ENCODE measurements at regions of chr12 and their contacts with region 1.

Region 1: DNA sequence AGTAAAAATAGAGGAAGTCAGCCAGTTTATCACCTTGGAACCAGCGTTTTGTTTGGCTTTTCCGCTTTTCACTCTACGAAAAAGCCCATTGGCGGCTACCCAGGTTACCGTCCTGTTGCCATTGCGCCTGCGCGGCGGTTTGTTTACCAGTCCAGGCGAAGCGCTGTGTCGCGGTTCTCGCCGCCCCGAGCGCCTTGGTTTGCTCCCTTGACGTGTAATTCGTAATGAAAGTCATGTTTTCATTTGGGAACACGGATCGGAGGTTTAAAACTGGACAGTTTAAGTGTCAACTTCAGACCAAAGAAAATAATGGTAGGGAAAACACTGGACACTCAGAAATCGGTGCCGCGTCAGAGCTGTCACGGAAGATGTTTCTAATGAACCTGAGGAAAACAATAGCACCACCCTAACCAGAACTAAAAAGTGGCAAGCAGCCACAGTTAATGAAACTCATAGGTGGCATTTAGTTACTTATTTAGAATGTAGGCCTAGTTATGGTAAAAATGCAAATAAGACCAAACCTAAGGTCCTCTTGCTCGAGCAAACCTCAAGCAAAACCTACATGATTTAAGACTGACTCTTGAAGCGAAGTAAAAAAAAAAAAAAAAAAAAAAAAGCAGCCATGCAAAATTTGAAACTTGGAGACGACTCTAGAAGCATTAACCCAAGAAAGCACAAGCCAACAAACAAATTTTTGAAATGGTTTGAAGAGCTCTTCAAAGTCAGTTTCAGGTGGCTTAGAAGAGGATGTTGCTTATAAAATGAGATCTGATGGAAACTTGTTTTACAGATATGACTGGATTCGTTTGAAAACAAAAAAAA is 790 bp upstream of the GPR19 start:
- DNase-seq: peak; percentile 85 to 96 (median 91)

Region 2: DNA sequence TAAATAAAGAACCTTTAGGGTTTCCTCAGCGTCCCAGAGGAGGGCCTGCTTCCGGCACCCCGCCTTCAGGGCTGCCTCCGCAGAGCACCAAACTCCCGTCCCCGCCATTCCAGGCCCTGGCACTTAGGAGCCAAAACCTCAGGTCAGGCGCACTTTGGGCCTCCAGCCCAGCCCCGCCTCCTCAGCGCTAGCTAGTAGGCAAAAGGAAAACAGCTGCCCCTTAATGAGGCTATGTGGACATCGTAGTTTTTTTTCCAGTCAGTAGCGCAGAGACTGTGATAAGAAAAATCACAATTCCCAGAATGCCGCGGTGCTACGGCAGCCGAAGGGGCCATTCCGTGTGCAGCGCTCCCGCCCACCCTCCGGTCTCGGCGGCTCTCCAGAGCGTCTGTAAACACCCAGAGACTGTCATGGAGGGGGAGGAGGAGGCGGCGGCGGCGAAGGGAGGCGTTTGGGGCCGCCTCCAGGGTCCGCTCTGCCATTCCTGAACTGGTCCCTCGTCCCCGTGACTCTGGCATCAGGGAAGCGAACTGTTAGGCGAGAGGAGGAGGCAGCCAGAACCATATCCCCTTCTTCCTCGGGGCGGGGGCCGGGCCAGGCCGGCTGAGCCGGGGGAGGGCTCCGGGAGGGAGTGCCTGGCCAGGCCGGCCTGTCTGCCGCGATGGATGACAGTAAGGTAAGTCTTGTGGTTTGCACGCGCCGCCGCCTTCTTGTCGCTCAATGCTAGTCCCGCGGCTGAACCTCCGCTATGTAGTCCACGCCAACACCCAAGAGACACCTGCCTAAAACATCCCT is 85.1 kb before region 1 on chr12 and contains the start of gene CREBL2:
- intact Hi-C with region 1: loop called (anchors 5 kb)
- DNase-seq: peak; percentile 85 to 97 (median 92)

Measured in head of caudate nucleus (tissue), 42 donors.